ENCODE measurements at regions of chr10 and their contacts with region 1.

Region 1: DNA sequence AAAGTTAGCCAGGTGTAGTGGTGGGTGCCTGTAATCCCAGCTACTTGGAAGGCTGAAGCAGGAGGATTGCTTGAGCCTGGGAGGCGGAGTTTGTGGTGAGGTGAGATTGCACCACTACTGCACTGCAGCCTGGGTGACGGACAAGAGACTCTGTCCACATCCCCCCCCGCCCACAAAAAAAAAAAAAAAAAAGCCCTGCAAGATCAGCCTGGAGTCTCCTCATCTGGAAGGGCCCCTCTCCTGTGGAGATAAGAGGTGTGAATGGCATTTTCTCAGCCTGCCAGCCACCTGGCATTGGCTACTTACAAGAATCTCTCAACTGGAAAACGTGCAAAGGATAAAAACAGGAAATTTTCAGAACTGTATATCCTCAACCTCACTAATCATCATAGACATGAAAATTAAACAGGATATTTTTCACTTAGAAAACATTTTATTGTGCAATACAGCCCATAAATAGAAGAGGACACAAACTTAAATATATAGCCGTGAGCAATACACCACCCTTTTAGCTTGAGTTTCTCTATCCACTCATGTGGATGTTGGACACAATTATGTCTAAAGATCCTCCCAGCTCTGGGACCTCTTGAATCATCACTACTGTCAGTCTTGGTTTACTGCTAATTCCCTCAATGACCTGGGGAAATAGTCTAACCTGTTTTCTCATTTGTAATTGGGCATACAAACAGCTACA is 11.3 kb upstream of the TSPAN15 start:
- DNase-seq: no peak
- ATAC-seq: peak; percentile 65
- H3K4me3 ChIP-seq: no peak overlapping the region
- H3K27ac ChIP-seq: peak overlapping the region; percentile 49; the same call in 1 of the 2 replicates
- H3K4me1 ChIP-seq: peaks cover 23 to 37% of the 10 kb centered on the region in 2 experiments
- H3K27me3 ChIP-seq: no peaks in the 10 kb centered on the region
- CTCF ChIP-seq: no peak
- POLR2A ChIP-seq: no peak
- RAD21 ChIP-seq: no peak

Region 2: GRCh38 chr10:69451209-69451783 is 11.3 kb after region 1 on chr10 and contains the start of gene TSPAN15:
- CTCF ChIA-PET with region 1: interaction called, 21 read pairs
- POLR2A ChIA-PET with region 1: interaction called, 6 read pairs
- RAD21 ChIA-PET with region 1: no interaction called
- intact Hi-C with region 1: no loop called
- DNase-seq: peak; percentile 75
- ATAC-seq: peak; percentile 84
- H3K4me3 ChIP-seq: peak within 1 kb of the TSS; percentile 73 to 82
- H3K27ac ChIP-seq: peak within 1 kb of the TSS; percentile 58
- H3K4me1 ChIP-seq: peaks cover 35 to 64% of the 10 kb centered on the region in 2 experiments
- H3K27me3 ChIP-seq: no peaks in the 10 kb centered on the region
- CTCF ChIP-seq: no peak
- POLR2A ChIP-seq: no peak
- RAD21 ChIP-seq: no peak
- total RNA-seq, gene TSPAN15: 16.0 TPM

Measured in HCT116 (cell line).